Activated CD8-positive, alpha-beta T cell treated with anti-CD3 and anti-CD28 coated beads for 36 hours (primary cell): ENCODE measurements at regions of chr5 and their contacts with region 1.

Region 1: GRCh38 chr5:157743163-157744050 is at the start of gene LSM11:
- DNase-seq: peak; percentile 93
- ATAC-seq: peak; percentile 96
- H3K4me3 Mint-ChIP-seq: peak within 1 kb of the TSS; percentile 95
- H3K27ac Mint-ChIP-seq: peak within 1 kb of the TSS; percentile 87
- H3K4me1 Mint-ChIP-seq: peaks cover 36% of the 10 kb centered on the region
- H3K27me3 Mint-ChIP-seq: no peaks in the 10 kb centered on the region
- CTCF ChIP-seq: peak; percentile 98
- total RNA-seq, gene LSM11: 7.0 to 7.3 TPM

Region 2: DNA sequence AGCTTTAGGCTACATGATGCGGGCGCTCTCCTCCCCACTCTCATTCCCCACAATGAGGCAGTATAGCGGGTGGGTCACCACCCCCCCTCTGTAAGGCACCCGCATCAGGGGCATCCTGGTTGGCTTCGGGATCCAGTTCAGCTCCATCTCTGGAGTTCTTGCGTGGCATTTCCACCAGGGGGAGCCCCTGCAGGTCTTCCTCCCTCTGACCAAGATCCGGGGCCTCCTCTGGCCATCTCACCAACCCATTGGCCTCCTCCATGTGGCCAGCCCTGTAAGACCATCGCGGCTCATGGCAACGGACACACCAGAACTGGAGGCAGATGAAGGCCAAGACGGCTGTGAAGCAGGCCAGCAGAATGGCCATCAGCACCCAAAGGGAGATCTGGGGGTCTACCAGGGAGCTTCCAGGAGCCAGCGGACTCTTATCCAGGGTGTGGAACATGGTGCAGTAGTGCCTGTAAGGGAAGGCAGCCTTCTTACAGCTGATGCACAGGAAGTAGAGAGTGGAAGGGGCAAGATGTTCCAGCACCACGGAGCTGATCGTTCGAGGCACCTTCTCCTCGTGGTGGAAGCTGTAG is 400.5 kb before region 1 on chr5:
- CTCF ChIA-PET with region 1: interaction called, 12 read pairs
- POLR2A ChIA-PET with region 1: no interaction called
- intact Hi-C with region 1: no loop called
- DNase-seq: peak; percentile 46
- ATAC-seq: no peak
- H3K4me3 Mint-ChIP-seq: no peak overlapping the region
- H3K27ac Mint-ChIP-seq: peak overlapping the region; percentile 50
- H3K4me1 Mint-ChIP-seq: peaks cover 39% of the 10 kb centered on the region
- H3K27me3 Mint-ChIP-seq: no peaks in the 10 kb centered on the region
- CTCF ChIP-seq: peak; percentile 69

Region 3: DNA sequence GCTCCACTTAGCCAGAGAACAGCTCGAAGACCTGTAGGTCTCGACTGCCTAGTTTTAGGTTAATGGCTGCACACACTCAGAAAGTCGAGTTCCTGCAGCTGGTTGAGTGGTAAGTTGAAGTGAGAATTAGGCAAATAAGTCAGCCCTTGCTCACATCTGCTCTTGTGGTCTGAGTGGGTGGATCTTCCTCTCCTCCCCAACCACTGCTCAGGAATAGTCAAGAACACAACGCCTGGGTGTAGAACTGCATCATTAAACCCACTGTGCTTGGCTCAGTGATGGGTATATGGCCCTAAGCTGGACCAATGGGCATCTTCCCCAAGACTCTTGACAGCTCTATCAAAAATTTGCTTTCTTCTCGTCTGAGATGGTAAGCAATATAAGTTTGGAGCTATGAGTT is 146.9 kb before region 1 on chr5:
- CTCF ChIA-PET with region 1: interaction called, 12 read pairs
- POLR2A ChIA-PET with region 1: no interaction called
- intact Hi-C with region 1: no loop called
- DNase-seq: peak; percentile 79
- ATAC-seq: peak; percentile 69
- H3K4me3 Mint-ChIP-seq: no peak overlapping the region
- H3K27ac Mint-ChIP-seq: peak overlapping the region; percentile 74
- H3K4me1 Mint-ChIP-seq: peaks cover 85% of the 10 kb centered on the region
- H3K27me3 Mint-ChIP-seq: peaks cover 6% of the 10 kb centered on the region
- CTCF ChIP-seq: no peak

Region 4: DNA sequence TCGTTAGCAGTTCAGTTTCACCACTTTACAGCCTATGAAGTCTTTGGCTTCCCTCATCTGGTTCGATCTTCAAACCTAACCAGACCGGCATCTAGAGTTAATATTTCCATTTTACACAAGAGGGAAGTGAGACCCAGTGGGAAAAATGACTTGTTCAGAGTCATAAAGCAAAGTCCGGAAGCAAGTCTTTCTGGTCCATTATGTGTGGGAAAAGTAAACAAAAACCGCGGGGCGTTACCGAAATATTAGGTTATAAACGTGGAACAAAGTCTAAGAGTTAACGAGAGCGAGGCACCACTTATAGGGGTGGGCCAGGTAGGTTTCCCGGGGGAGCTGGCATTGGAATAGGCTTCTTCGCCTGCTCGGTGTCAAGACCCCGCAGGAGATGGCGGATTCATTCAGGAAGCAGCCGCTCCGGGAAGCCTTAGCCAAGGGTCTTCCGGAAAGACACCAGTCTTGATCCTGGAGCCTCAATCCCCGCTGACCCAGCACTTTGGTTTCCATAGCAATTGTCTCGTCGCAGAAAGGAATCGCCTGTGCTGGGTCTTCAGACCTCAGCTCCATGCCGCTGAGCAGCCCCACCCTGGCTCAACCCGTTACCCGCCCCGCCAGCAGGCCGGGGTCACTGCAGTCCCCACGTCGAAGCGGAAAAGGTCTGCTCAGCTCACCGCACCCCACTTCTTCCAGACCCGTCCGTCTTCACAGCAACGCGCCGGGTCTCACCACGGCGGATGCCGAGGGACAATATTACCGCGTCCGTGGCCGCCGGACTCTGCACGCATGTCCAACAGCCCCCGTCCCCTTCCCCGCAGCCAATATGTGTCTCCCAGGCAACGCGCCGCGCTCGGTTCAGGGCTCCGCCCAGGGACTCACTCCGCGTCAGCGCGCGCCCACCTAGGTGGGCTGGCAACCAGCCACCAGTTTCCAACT is 72.5 kb before region 1 on chr5 and contains the start of gene C5orf52:
- CTCF ChIA-PET with region 1: interaction called, 52 read pairs
- POLR2A ChIA-PET with region 1: no interaction called
- intact Hi-C with region 1: loop called (anchors 1 kb)
- DNase-seq: peak; percentile 27
- ATAC-seq: peak; percentile 40
- H3K4me3 Mint-ChIP-seq: peak within 1 kb of the TSS; percentile 80
- H3K27ac Mint-ChIP-seq: no peak within 1 kb of the TSS
- H3K4me1 Mint-ChIP-seq: peaks cover 21% of the 10 kb centered on the region
- H3K27me3 Mint-ChIP-seq: peaks cover 32% of the 10 kb centered on the region
- CTCF ChIP-seq: no peak
- total RNA-seq, gene C5orf52: not detected

Region 5: DNA sequence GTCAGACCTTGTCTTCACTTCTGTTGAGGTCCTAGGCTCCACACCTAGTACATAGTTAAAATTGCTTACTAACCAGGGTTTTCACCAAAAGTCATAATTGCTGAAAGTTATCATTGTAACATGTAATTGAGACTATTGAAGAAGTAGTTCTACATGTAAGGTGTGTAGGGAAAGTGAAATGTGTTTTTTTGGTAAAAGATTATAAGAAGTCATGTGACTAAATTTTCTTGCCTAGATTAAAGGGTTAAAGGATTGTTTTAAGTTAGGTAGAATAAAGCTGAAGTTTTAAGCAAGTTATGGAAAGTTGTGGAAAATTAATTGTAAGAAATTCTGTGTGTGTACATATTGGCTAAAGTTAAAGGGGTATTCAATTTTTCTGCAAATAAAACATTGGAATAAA is 46.0 kb before region 1 on chr5:
- CTCF ChIA-PET with region 1: no interaction called
- POLR2A ChIA-PET with region 1: no interaction called
- intact Hi-C with region 1: no loop called
- DNase-seq: no peak
- ATAC-seq: no peak
- H3K4me3 Mint-ChIP-seq: no peak overlapping the region
- H3K27ac Mint-ChIP-seq: no peak overlapping the region
- H3K4me1 Mint-ChIP-seq: no peaks in the 10 kb centered on the region
- H3K27me3 Mint-ChIP-seq: peaks cover 3% of the 10 kb centered on the region
- CTCF ChIP-seq: no peak

Region 6: GRCh38 chr5:157731272-157732129 is 11.9 kb before region 1 on chr5 and contains the start of gene THG1L:
- CTCF ChIA-PET with region 1: interaction called, 33 read pairs
- POLR2A ChIA-PET with region 1: interaction called, 8 read pairs
- intact Hi-C with region 1: no loop called
- DNase-seq: peak; percentile 99
- ATAC-seq: peak; percentile 92
- H3K4me3 Mint-ChIP-seq: peak within 1 kb of the TSS; percentile 92
- H3K27ac Mint-ChIP-seq: peak within 1 kb of the TSS; percentile 98
- H3K4me1 Mint-ChIP-seq: peaks cover 26% of the 10 kb centered on the region
- H3K27me3 Mint-ChIP-seq: no peaks in the 10 kb centered on the region
- CTCF ChIP-seq: no peak
- total RNA-seq, gene THG1L: 24.9 to 26.6 TPM

Region 7: GRCh38 chr5:157761690-157762621 is 18.5 kb after region 1 on chr5:
- CTCF ChIA-PET with region 1: interaction called, 51 read pairs
- POLR2A ChIA-PET with region 1: interaction called, 5 read pairs
- intact Hi-C with region 1: no loop called
- DNase-seq: peak; percentile 25
- ATAC-seq: peak; percentile 88
- H3K4me3 Mint-ChIP-seq: no peak overlapping the region
- H3K27ac Mint-ChIP-seq: no peak overlapping the region
- H3K4me1 Mint-ChIP-seq: peaks cover 4% of the 10 kb centered on the region
- H3K27me3 Mint-ChIP-seq: no peaks in the 10 kb centered on the region
- CTCF ChIP-seq: peak; percentile 82